ENCODE measurements at regions of chr3 and their contacts with region 1.

Region 1: DNA sequence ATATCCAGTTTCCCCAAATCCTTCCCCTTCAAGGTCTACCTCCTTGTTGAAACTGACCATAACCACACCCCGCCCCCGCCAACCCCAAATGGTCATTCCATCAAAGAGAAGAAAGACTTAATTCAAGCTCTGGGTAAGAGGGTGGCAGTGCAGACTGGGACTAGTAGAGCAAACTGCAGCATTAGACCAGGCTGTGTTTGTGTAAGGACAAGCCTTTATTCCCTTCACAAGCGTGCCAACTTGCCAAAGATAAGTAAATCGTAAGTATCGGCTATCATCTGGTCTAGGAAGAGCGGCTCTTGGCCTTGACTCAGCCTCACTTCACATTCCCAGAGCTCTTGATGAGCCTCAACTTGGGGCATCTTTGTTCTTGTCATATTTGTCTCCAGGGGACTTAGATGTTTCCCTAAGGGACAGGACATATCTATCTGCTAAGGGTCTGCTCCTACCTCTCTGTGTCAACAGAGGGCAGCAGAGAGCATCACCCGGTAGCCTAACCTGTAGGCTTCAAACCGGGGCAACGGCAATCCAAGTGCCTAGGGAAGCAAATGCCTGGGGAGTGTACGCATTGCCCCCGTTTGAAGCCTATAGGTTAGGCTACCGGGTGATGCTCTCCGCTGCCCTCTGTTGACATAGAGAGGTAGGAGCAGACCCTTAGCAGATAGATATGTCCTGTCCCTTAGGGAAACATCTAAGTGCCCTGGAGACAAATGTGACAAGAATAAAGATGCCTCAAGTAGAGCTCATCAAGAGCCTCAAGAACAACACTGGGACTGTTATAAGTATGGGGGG is 8.9 kb upstream of the MAP3K13 start:
- DNase-seq: peak; percentile 73
- H3K4me3 ChIP-seq: peak overlapping the region in 1 of 2 experiments; percentile 13; a peak in 1 of 4 replicates
- H3K27ac ChIP-seq: no peak overlapping the region
- H3K4me1 ChIP-seq: no peaks in the 10 kb centered on the region; a peak in 1 of 4 replicates
- H3K27me3 ChIP-seq: no peaks in the 10 kb centered on the region
- CTCF ChIP-seq: peak; percentile 63
- EP300 ChIP-seq: no peak
- RAD21 ChIP-seq: peak; percentile 72

Region 2: DNA sequence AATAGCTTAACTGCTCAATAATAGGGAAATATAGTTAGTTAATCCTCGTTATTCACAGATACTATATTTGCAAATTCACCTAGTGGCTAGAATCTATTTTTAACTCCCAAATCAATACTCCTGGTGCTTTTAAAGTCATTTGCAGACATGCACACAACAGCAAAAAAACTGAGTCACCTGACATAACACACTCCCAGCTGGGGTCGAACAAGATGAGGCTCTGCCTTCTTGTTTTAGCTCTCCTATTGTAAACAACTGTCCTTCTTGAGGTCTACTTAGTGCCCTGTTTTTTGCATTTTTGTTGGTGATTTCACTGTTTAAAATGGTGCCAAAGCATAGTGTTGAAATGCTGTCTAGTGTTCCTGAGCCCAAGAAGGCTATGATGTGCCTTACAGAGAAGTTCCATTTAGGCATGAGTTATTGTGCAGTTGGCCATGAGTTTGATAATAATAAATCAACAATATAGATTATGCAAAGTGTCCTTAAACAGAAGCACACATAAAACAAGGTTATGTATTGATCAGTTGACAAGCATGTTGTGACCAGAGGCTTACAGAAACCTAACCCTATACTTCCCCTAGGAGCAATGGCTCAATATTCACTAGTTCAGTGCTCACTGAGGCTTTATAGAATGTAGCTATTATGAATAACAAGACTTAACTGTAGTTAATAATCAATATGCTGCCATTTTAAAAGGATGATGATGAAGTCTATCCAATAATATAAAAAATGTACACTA is 27.5 kb after region 1 on chr3:
- CTCF ChIA-PET with region 1: no interaction called
- POLR2A ChIA-PET with region 1: no interaction called
- DNase-seq: no peak
- H3K4me3 ChIP-seq: no peak overlapping the region
- H3K27ac ChIP-seq: no peak overlapping the region
- H3K4me1 ChIP-seq: no peaks in the 10 kb centered on the region
- H3K27me3 ChIP-seq: no peaks in the 10 kb centered on the region
- CTCF ChIP-seq: no peak
- EP300 ChIP-seq: no peak
- RAD21 ChIP-seq: no peak

Region 3: GRCh38 chr3:185572183-185572582 is 218.2 kb after region 1 on chr3:
- CTCF ChIA-PET with region 1: interaction called, 15 read pairs
- POLR2A ChIA-PET with region 1: no interaction called
- DNase-seq: no peak
- H3K4me3 ChIP-seq: no peak overlapping the region
- H3K27ac ChIP-seq: no peak overlapping the region
- H3K4me1 ChIP-seq: no peaks in the 10 kb centered on the region
- H3K27me3 ChIP-seq: no peaks in the 10 kb centered on the region
- CTCF ChIP-seq: no peak
- EP300 ChIP-seq: no peak
- RAD21 ChIP-seq: no peak